Activated B cell treated with CpG ODN at 0.5 μM for 24 hours (primary cell): ENCODE measurements at regions of chr10 and their contacts with region 1.

Region 1: DNA sequence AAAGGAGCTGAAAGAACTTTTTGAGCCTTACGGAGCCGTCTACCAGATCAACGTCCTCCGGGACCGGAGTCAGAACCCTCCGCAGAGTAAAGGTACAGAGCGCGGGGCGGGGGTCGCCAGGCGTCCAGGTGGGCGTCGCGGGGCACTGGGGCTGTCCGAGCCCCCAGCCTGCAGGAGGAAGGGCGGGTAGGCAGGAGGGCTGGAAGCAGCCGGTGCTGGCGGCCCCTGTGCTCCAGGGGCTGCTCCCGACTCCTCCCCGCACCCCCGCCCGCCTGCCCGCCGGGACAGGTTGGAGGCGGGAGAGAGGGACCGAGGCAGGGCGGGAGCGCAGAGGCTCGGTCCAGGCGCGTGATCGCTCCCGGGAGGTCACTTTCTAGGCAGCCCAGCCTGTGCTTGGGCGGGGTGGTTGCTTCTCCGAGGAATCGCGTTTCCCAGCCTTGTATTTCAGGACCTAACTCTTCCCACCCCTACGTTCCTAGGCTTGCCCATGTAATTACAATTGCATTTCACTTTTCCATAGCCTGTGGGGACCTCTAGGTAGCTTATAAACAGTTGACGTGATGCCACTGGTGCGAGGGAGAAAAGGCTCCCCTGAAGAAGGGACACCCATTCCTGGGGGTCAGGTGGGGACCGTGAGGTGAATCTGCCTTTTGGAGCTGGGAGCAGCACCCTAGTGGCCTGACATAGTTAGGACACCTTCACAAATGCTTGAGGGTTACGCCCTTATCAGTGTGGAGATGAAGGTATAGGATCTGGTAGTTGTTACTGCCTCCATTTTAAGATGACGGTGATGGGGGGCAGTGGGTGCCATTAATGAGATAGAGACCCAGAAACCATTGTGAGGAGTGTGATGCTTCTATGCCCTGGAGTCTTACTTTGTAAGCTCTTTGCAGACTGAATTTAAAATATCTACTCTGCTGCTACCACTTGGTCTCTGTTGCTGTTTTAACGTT is 148.2 kb downstream of the CELF2 start:
- DNase-seq: no peak
- ATAC-seq: peak; percentile 55
- H3K4me3 Mint-ChIP-seq: no peak overlapping the region
- H3K27ac Mint-ChIP-seq: peak overlapping the region; percentile 99
- H3K4me1 Mint-ChIP-seq: peaks cover 51% of the 10 kb centered on the region
- H3K27me3 Mint-ChIP-seq: no peaks in the 10 kb centered on the region
- CTCF ChIP-seq: no peak

Region 2: DNA sequence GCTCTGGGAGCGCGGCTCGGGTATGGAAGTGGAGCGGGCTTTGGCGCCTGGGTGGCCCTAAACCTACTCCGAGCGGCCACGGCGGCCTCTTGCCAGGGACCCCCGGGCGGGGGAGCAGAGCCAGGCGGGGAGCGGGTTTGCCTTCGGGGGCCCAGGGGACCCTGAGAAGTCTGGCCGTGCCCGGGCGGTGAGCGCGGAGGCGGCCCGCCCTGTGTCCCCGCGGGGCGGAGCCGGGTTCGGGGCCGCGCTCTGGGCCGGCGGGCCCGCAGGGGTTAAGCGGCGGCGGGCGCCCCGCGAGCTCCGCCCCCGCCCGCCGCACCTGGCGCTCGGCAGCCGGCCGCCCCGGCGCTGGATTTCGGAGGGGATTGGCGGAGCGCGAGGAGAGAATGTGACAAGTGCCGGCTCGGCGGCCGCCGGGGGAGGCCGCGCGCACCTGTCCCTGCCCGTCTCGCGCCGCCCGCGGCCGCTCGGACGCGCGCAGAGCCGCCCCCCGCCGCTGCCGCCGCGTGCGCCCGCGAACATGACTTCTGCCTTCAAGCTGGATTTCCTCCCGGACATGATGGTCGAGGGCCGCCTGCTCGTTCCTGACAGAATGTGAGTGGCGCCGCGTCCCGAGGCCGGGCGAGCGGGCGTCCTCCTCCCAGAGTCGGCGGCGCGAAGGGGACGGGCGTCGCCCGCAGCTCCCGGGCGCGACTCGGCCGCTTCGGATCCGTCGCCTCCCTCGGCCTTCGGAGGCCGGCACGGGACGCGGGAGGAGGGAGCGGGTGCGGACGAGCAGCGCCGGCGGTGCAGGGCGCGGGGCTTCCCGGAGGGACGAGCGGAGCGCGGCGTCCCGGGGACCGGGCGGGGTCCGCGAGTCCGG is 148.1 kb before region 1 on chr10 and contains the start of gene CELF2:
- CTCF ChIA-PET with region 1: no interaction called
- POLR2A ChIA-PET with region 1: no interaction called
- intact Hi-C with region 1: loop called (anchors 2 kb)
- DNase-seq: peak; percentile 53
- ATAC-seq: peak; percentile 78
- H3K4me3 Mint-ChIP-seq: peak within 1 kb of the TSS; percentile 79
- H3K27ac Mint-ChIP-seq: no peak within 1 kb of the TSS
- H3K4me1 Mint-ChIP-seq: peaks cover 12% of the 10 kb centered on the region
- H3K27me3 Mint-ChIP-seq: peaks cover 67% of the 10 kb centered on the region
- CTCF ChIP-seq: no peak
- total RNA-seq, gene CELF2: 78.9 and 89.2 TPM in 2 replicates

Region 3: GRCh38 chr10:11145495-11145855 is 20.4 kb before region 1 on chr10:
- CTCF ChIA-PET with region 1: interaction called, 44 read pairs
- POLR2A ChIA-PET with region 1: interaction called, 73 read pairs
- intact Hi-C with region 1: loop called (anchors 1 kb)
- DNase-seq: no peak
- ATAC-seq: peak; percentile 79
- H3K4me3 Mint-ChIP-seq: peak overlapping the region; percentile 80
- H3K27ac Mint-ChIP-seq: peak overlapping the region; percentile 97
- H3K4me1 Mint-ChIP-seq: peaks cover 92% of the 10 kb centered on the region
- H3K27me3 Mint-ChIP-seq: no peaks in the 10 kb centered on the region
- CTCF ChIP-seq: no peak

Region 4: GRCh38 chr10:11197266-11197712 is 31.4 kb after region 1 on chr10:
- CTCF ChIA-PET with region 1: no interaction called
- POLR2A ChIA-PET with region 1: interaction called, 11 read pairs
- intact Hi-C with region 1: loop called (anchors 1 kb)
- DNase-seq: no peak
- ATAC-seq: peak; percentile 82
- H3K4me3 Mint-ChIP-seq: peak overlapping the region; percentile 81
- H3K27ac Mint-ChIP-seq: peak overlapping the region; percentile 94
- H3K4me1 Mint-ChIP-seq: peaks cover 97% of the 10 kb centered on the region
- H3K27me3 Mint-ChIP-seq: no peaks in the 10 kb centered on the region
- CTCF ChIP-seq: no peak

Region 5: DNA sequence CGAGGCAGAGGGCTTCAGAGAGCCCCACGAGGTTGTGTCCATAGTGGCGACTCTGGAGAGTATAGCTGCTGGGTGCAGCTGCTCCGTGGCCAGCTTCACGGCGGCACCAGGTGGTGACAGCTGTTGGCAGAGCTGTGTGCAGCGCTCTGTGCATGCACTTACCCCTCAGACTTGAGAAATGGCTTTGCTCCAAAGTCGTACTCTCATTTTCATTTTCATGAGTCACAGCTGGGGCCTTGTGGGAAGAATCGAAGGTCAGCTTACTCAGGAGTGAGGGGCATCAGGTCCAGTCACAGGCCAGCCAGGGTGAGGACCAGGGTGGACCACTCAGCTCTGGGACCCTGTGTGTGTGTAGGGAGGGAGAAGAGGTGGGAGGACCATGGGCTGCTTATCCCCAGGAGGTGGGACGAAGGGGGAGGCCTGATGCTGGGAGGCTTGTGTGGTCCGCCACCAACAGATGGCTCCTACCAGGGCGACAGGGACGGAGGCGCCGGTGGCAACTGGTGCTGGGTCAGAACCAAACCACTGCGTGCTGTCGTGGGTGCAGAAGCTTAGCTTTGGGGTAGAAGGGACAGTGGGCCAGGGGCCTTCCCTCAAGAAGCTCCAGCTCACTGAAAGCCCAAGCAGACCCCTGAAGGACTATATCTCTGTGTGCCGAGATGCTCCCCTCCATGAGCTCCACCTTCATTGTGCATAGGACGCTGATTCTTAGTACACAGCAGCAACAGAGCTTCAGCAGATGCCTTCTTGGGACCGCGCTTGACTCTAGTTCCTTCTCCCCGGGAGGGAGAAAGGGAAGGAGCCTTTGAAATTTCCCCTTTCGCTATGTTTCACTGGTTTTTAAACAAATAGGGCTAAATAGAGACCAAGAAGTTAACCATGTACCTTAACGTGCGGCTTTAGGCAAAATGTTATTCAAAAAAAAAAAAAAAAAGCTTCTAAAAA is 76.8 kb after region 1 on chr10:
- CTCF ChIA-PET with region 1: interaction called, 17 read pairs
- POLR2A ChIA-PET with region 1: interaction called, 94 read pairs
- intact Hi-C with region 1: loop called (anchors 1 kb)
- DNase-seq: peak; percentile 54
- ATAC-seq: peak; percentile 59
- H3K4me3 Mint-ChIP-seq: peak overlapping the region; percentile 88
- H3K27ac Mint-ChIP-seq: no peak overlapping the region
- H3K4me1 Mint-ChIP-seq: peaks cover 8% of the 10 kb centered on the region
- H3K27me3 Mint-ChIP-seq: no peaks in the 10 kb centered on the region
- CTCF ChIP-seq: no peak

Region 6: GRCh38 chr10:12195603-12196506 is 1030.0 kb after region 1 on chr10 and contains the starts of genes CDC123 and NUDT5:
- CTCF ChIA-PET with region 1: no interaction called
- POLR2A ChIA-PET with region 1: no interaction called
- intact Hi-C with region 1: loop called (anchors 10 kb)
- DNase-seq: peak; percentile 81
- ATAC-seq: peak; percentile 92
- H3K4me3 Mint-ChIP-seq: peak within 1 kb of the TSS; percentile 93
- H3K27ac Mint-ChIP-seq: peak within 1 kb of the TSS; percentile 99
- H3K4me1 Mint-ChIP-seq: peaks cover 49% of the 10 kb centered on the region
- H3K27me3 Mint-ChIP-seq: no peaks in the 10 kb centered on the region
- CTCF ChIP-seq: no peak
- total RNA-seq, gene CDC123: 81.1 and 84.6 TPM in 2 replicates
- total RNA-seq, gene NUDT5: 53.2 and 57.3 TPM in 2 replicates